ENCODE measurements at regions of chr15 and their contacts with region 1.

Region 1: GRCh38 chr15:34367101-34368081 is at the start of gene LPCAT4:
- DNase-seq: peak; percentile 83 to 95
- ATAC-seq: peak; percentile 88 to 96 (median 92)
- H3K4me3 ChIP-seq: peak within 1 kb of the TSS; percentile 95
- H3K4me3 Mint-ChIP-seq: peak within 1 kb of the TSS; percentile 98
- H3K27ac ChIP-seq: peak within 1 kb of the TSS; percentile 86
- H3K27ac Mint-ChIP-seq: peak within 1 kb of the TSS; percentile 88 to 91
- H3K4me1 ChIP-seq: peaks cover 37% of the 10 kb centered on the region
- H3K4me1 Mint-ChIP-seq: peaks cover 23 to 35% of the 10 kb centered on the region in 2 donors
- H3K27me3 ChIP-seq: no peaks in the 10 kb centered on the region
- H3K27me3 Mint-ChIP-seq: no peaks in the 10 kb centered on the region
- CTCF ChIP-seq: peak; percentile 99
- total RNA-seq, gene LPCAT4: 42.1 to 50.1 (median 44.5) TPM

Region 2: DNA sequence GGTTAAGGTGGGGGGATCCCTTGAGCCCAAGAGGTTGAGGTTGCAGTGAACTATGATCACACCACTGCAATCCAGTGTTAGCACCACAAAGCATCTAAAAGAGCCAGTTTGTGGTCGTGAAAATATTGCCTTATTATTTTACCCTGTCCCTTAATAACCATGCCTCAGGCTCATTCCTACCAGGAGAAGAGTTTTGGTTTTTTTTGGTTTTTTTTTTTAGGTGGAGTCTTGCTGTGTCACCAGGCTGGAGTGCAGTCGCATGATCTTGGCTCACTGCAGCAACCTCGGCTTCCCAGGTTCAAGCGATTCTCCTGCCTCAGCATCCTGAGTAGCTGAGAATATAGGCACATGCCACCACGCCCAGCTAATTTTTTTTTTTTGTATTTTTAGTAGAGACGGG is 310.5 kb before region 1 on chr15:
- intact Hi-C with region 1: loop called (anchors 2 kb)
- DNase-seq: no peak
- ATAC-seq: no peak
- H3K4me3 ChIP-seq: no peak overlapping the region
- H3K4me3 Mint-ChIP-seq: no peak overlapping the region
- H3K27ac ChIP-seq: no peak overlapping the region
- H3K27ac Mint-ChIP-seq: no peak overlapping the region
- H3K4me1 ChIP-seq: no peaks in the 10 kb centered on the region
- H3K4me1 Mint-ChIP-seq: peaks cover 3 to 4% of the 10 kb centered on the region in 2 donors
- H3K27me3 ChIP-seq: no peaks in the 10 kb centered on the region
- H3K27me3 Mint-ChIP-seq: no peaks in the 10 kb centered on the region
- CTCF ChIP-seq: no peak

Region 3: GRCh38 chr15:34101366-34102175 is 265.8 kb before region 1 on chr15 and contains the starts of genes EMC7 and PGBD4:
- intact Hi-C with region 1: loop called (anchors 2 kb)
- DNase-seq: peak; percentile 99
- ATAC-seq: peak; percentile 95 to 99 (median 98)
- H3K4me3 ChIP-seq: peak within 1 kb of the TSS; percentile 91
- H3K4me3 Mint-ChIP-seq: peak within 1 kb of the TSS; percentile 96
- H3K27ac ChIP-seq: peak within 1 kb of the TSS; percentile 96
- H3K27ac Mint-ChIP-seq: peak within 1 kb of the TSS; percentile 99 to 100
- H3K4me1 ChIP-seq: peaks cover 4% of the 10 kb centered on the region
- H3K4me1 Mint-ChIP-seq: peaks cover 35% of the 10 kb centered on the region in 2 donors
- H3K27me3 ChIP-seq: no peaks in the 10 kb centered on the region
- H3K27me3 Mint-ChIP-seq: no peaks in the 10 kb centered on the region
- CTCF ChIP-seq: no peak
- total RNA-seq, gene EMC7: 55.9 to 60.8 (median 59.6) TPM
- total RNA-seq, gene PGBD4: 3.2 to 4.2 (median 4.0) TPM

Region 4: GRCh38 chr15:34241372-34242330 is 125.7 kb before region 1 on chr15:
- intact Hi-C with region 1: loop called (anchors 1 kb)
- DNase-seq: peak in 1 of 2 donors; percentile 76
- ATAC-seq: peak; percentile 78 to 88 (median 87)
- H3K4me3 ChIP-seq: no peak overlapping the region
- H3K4me3 Mint-ChIP-seq: no peak overlapping the region
- H3K27ac ChIP-seq: no peak overlapping the region
- H3K27ac Mint-ChIP-seq: no peak overlapping the region
- H3K4me1 ChIP-seq: no peaks in the 10 kb centered on the region
- H3K4me1 Mint-ChIP-seq: no peaks in the 10 kb centered on the region
- H3K27me3 ChIP-seq: no peaks in the 10 kb centered on the region
- H3K27me3 Mint-ChIP-seq: no peaks in the 10 kb centered on the region
- CTCF ChIP-seq: peak; percentile 88

Region 5: GRCh38 chr15:34337557-34338306 is 29.7 kb before region 1 on chr15 and contains the start of gene SLC12A6:
- intact Hi-C with region 1: loop called (anchors 2 kb)
- DNase-seq: peak; percentile 91 to 95
- ATAC-seq: peak; percentile 84 to 94 (median 91)
- H3K4me3 ChIP-seq: peak within 1 kb of the TSS; percentile 79
- H3K4me3 Mint-ChIP-seq: peak within 1 kb of the TSS; percentile 97
- H3K27ac ChIP-seq: peak within 1 kb of the TSS; percentile 76
- H3K27ac Mint-ChIP-seq: peak within 1 kb of the TSS; percentile 92 to 95
- H3K4me1 ChIP-seq: peaks cover 41% of the 10 kb centered on the region
- H3K4me1 Mint-ChIP-seq: peaks cover 47 to 52% of the 10 kb centered on the region in 2 donors
- H3K27me3 ChIP-seq: no peaks in the 10 kb centered on the region
- H3K27me3 Mint-ChIP-seq: no peaks in the 10 kb centered on the region
- CTCF ChIP-seq: no peak
- total RNA-seq, gene SLC12A6: 56.1 to 82.9 (median 79.5) TPM

Region 6: GRCh38 chr15:34342737-34343575 is 24.4 kb before region 1 on chr15 and contains the starts of genes NOP10 and NUTM1:
- intact Hi-C with region 1: loop called (anchors 1 kb)
- DNase-seq: peak; percentile 91 to 96
- ATAC-seq: peak; percentile 91 to 96 (median 93)
- H3K4me3 ChIP-seq: peak within 1 kb of the TSS; percentile 90
- H3K4me3 Mint-ChIP-seq: peak within 1 kb of the TSS; percentile 88
- H3K27ac ChIP-seq: peak within 1 kb of the TSS; percentile 78
- H3K27ac Mint-ChIP-seq: no peak within 1 kb of the TSS
- H3K4me1 ChIP-seq: peaks cover 14% of the 10 kb centered on the region
- H3K4me1 Mint-ChIP-seq: peaks cover 11 to 12% of the 10 kb centered on the region in 2 donors
- H3K27me3 ChIP-seq: no peaks in the 10 kb centered on the region
- H3K27me3 Mint-ChIP-seq: peaks cover 0 to 2% of the 10 kb centered on the region in 2 donors
- CTCF ChIP-seq: peak; percentile 98
- total RNA-seq, gene NOP10: 56.6 to 69.9 (median 56.7) TPM
- total RNA-seq, gene NUTM1: not detected